Gastrocnemius medialis (tissue), 4 donors: ENCODE measurements at regions of chr10 and their contacts with region 1.

Region 1: DNA sequence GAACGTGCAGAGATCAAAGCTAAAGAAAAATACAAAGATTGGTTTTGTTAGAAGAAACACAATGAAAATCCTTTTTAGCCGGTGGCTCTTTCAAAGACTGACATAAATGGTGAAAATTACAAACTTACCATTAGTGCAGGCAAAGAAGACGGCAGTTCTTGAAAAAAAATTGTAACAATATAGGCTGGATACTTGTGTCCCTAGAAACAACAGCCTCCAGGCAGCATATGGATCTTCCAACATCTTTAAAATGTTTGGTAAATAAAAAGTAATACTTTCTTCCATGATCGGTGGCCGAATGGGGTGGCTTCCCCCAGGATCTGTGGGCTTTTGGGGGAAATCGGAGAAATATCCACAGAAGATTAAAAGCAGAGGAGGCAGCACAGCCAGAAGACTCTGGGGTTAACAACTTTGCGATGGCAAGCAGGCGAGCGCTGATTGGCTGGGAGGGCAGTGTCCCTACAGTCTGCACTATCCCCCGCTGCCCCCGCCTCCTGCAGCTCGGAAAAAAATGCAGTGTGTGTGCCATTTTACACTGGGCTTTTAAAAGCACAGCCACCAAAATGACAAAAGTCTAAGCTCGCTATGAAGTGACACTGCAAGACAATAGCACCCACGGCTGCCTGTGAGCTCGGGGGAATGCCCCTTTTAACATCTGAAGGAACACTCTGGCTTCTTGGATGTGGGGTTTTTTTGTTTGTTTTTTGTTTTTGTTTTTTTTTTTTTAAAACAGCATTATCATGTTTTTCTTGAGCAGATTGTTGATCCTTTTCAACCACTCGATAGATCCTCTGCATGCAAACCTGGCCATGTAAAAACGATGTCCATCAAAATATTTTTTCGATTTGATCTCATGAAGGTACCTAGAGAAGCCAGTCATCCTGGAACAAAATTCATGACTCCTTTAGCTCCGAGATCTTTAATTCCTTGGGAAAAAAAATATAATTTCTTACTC is 31.7 kb upstream of the EPC1 start:
- DNase-seq: peak; percentile 93 to 95
- ATAC-seq: peak; percentile 94 to 96
- H3K4me3 ChIP-seq: peak overlapping the region; percentile 66 to 88 (median 78)
- H3K27ac ChIP-seq: peak overlapping the region; percentile 80 to 93 (median 84)
- H3K4me1 ChIP-seq: peaks cover 30 to 37% of the 10 kb centered on the region in 2 donors
- H3K27me3 ChIP-seq: no peaks in the 10 kb centered on the region
- CTCF ChIP-seq: peak in 1 of 5 experiments; percentile 9
- POLR2A ChIP-seq: peak; percentile 34 to 55

Region 2: GRCh38 chr10:31864834-31865518 is 513.7 kb before region 1 on chr10:
- in situ Hi-C with region 1: no loop called
- intact Hi-C with region 1: loop called (anchors 10 kb)
- DNase-seq: no peak
- ATAC-seq: no peak
- H3K4me3 ChIP-seq: peak overlapping the region; percentile 1 to 22 (median 4)
- H3K27ac ChIP-seq: peak overlapping the region in 3 of 4 donors; percentile 31 to 44 (median 41)
- H3K4me1 ChIP-seq: peaks cover 28 to 32% of the 10 kb centered on the region in 2 donors
- H3K27me3 ChIP-seq: no peaks in the 10 kb centered on the region
- CTCF ChIP-seq: no peak
- POLR2A ChIP-seq: no peak

Region 3: GRCh38 chr10:31928549-31929260 is 449.9 kb before region 1 on chr10 and contains the start of gene ARHGAP12:
- in situ Hi-C with region 1: no loop called
- intact Hi-C with region 1: loop called (anchors 5 kb)
- DNase-seq: peak; percentile 82 to 92
- ATAC-seq: peak; percentile 88 to 91
- H3K4me3 ChIP-seq: peak within 1 kb of the TSS; percentile 88 to 98 (median 90)
- H3K27ac ChIP-seq: peak within 1 kb of the TSS; percentile 98
- H3K4me1 ChIP-seq: peaks cover 25 to 33% of the 10 kb centered on the region in 2 donors
- H3K27me3 ChIP-seq: no peaks in the 10 kb centered on the region
- CTCF ChIP-seq: peak in 1 of 5 experiments; percentile 12
- POLR2A ChIP-seq: peak; percentile 97 to 99
- total RNA-seq, gene ARHGAP12: 17.0 to 34.3 (median 21.6) TPM

Region 4: DNA sequence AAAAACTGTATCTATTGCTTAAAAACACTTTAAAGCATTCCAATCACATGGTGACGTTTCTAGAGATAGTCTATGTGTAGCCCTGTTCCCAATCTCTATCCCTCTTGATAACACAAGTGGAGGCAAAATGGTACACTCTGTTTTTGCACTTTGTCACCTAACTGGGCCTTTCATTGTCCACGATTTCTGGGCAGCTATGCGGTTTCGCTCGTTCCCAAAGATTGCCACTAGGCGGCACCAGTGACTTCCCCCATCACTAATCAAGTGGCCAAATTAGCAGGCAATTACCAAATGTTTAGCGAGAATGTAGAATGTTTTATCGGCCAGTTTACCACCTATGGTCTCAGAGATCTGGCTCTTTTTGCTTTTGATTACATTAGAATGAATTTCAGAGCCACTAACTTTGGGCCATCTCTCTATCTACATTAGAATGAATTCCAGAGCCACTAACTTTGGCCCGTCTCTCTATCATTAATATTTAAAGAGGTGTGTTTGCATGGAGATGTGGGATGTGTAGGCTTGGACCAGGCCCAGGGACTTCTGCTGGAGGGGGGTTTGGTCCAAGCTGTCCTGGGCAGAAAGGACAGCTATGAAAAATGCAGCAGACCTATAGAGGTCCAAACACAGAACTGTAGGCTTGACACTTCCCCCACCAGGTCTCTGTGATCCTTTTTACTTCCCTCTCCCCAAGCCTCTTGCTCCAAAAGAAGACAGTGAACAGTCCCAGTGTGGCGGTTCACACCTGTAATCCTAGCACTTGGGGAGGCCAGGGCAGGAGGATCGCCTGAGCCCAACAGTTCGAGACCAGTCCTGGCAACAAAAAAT is 121.8 kb before region 1 on chr10:
- in situ Hi-C with region 1: loop called in 1 of 4 experiments (anchors 10 kb)
- intact Hi-C with region 1: no loop called
- DNase-seq: peak; percentile 23 to 33
- ATAC-seq: peak; percentile 66 to 77
- H3K4me3 ChIP-seq: no peak overlapping the region
- H3K27ac ChIP-seq: no peak overlapping the region
- H3K4me1 ChIP-seq: no peaks in the 10 kb centered on the region
- H3K27me3 ChIP-seq: no peaks in the 10 kb centered on the region
- CTCF ChIP-seq: peak; percentile 77 to 88 (median 84)
- POLR2A ChIP-seq: no peak

Region 5: GRCh38 chr10:32346134-32346550 is 32.5 kb before region 1 on chr10:
- in situ Hi-C with region 1: no loop called
- intact Hi-C with region 1: loop called (anchors 1 kb)
- DNase-seq: peak; percentile 95 to 97
- ATAC-seq: peak; percentile 84 to 85
- H3K4me3 ChIP-seq: peak overlapping the region; percentile 78 to 98 (median 89)
- H3K27ac ChIP-seq: peak overlapping the region; percentile 96 to 100 (median 100)
- H3K4me1 ChIP-seq: peaks cover 64 to 66% of the 10 kb centered on the region in 2 donors
- H3K27me3 ChIP-seq: no peaks in the 10 kb centered on the region
- CTCF ChIP-seq: peak; percentile 97 to 99 (median 99)
- POLR2A ChIP-seq: peak in 1 of 2 donors; percentile 42

Region 6: DNA sequence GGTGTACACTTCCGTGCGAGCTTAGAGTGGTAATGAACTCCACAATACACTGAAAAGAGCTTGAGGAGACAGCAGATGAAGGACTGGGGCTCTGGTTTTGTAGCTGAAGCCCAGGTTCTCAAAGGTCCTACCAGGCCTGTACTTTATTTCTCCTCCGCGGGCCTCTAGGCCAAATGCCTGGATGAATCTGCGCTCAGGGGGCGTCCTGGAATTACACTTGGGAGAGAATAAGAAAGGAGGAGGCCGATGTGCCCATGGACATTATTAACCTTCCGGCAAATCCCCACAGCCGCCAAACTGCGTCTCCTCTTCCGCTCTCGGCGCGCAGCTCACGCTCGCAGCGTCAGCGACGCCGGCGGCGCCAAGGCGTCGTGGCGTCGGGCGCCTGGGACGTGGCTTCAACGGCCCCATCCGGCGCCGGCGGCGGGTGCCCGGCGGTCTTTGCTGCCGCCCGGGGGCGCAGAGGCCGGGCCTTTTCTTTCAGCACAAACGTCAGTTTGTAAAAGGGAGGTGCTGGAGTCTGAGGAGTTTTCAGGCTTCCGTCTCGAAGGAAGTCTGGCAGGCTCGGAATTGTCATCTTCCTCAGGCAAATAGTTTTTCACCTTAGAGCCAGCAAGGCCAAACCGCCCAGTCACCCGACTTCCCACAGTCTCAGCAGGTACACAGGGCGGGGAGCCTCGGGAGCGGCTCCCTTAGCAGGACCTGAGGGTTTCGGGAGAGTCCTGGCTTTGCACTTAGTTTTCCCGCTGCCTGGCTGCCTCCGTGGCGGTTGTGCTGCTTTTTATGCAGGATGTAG is 67.3 kb after region 1 on chr10 and contains the start of gene CCDC7:
- in situ Hi-C with region 1: loop called in 2 of 4 experiments (anchors 5 to 10 kb)
- intact Hi-C with region 1: loop called (anchors 2 kb)
- DNase-seq: peak; percentile 57 to 76
- ATAC-seq: peak; percentile 93 to 95
- H3K4me3 ChIP-seq: peak within 1 kb of the TSS; percentile 67 to 99 (median 80)
- H3K27ac ChIP-seq: peak within 1 kb of the TSS; percentile 84 to 99 (median 90)
- H3K4me1 ChIP-seq: peaks cover 9 to 11% of the 10 kb centered on the region in 2 donors
- H3K27me3 ChIP-seq: no peaks in the 10 kb centered on the region
- CTCF ChIP-seq: peak; percentile 31 to 64 (median 38)
- POLR2A ChIP-seq: peak; percentile 54 to 67
- total RNA-seq, gene CCDC7: 4.6 to 12.9 (median 5.9) TPM

Region 7: GRCh38 chr10:32958085-32959005 is 579.7 kb after region 1 on chr10 and contains the start of gene ITGB1:
- in situ Hi-C with region 1: no loop called
- intact Hi-C with region 1: loop called (anchors 5 kb)
- DNase-seq: peak; percentile 94 to 96
- ATAC-seq: peak; percentile 87 to 90
- H3K4me3 ChIP-seq: peak within 1 kb of the TSS; percentile 72 to 96 (median 76)
- H3K27ac ChIP-seq: peak within 1 kb of the TSS; percentile 93 to 98 (median 96)
- H3K4me1 ChIP-seq: peaks cover 53 to 64% of the 10 kb centered on the region in 2 donors
- H3K27me3 ChIP-seq: no peaks in the 10 kb centered on the region
- CTCF ChIP-seq: no peak
- POLR2A ChIP-seq: peak; percentile 94 to 97
- total RNA-seq, gene ITGB1: 242 to 379 (median 368) TPM

Region 8: GRCh38 chr10:33365871-33366411 is 987.3 kb after region 1 on chr10:
- in situ Hi-C with region 1: no loop called
- intact Hi-C with region 1: no loop called
- DNase-seq: no peak
- ATAC-seq: no peak
- H3K4me3 ChIP-seq: no peak overlapping the region
- H3K27ac ChIP-seq: no peak overlapping the region
- H3K4me1 ChIP-seq: no peaks in the 10 kb centered on the region
- H3K27me3 ChIP-seq: no peaks in the 10 kb centered on the region
- CTCF ChIP-seq: no peak
- POLR2A ChIP-seq: no peak